Gastrocnemius medialis (tissue), 4 donors: ENCODE measurements at regions of chr22 and their contacts with region 1.

Region 1: GRCh38 chr22:22959147-22959827 is 71.7 kb downstream of the IGLL5 start:
- DNase-seq: peak in 1 of 2 donors; percentile 33
- ATAC-seq: no peak
- H3K4me3 ChIP-seq: no peak overlapping the region
- H3K27ac ChIP-seq: peak overlapping the region in 3 of 4 donors; percentile 18 to 56 (median 50)
- H3K4me1 ChIP-seq: no peaks in the 10 kb centered on the region
- H3K27me3 ChIP-seq: peaks cover 2 to 5% (median 3%) of the 10 kb centered on the region in 3 donors
- CTCF ChIP-seq: peak; percentile 70 to 88 (median 71)
- POLR2A ChIP-seq: no peak

Region 2: GRCh38 chr22:22207845-22208564 is 751.3 kb before region 1 on chr22:
- in situ Hi-C with region 1: no loop called
- intact Hi-C with region 1: loop called (anchors 10 kb)
- DNase-seq: peak in 1 of 2 donors; percentile 11
- ATAC-seq: no peak
- H3K4me3 ChIP-seq: no peak overlapping the region
- H3K27ac ChIP-seq: no peak overlapping the region
- H3K4me1 ChIP-seq: no peaks in the 10 kb centered on the region
- H3K27me3 ChIP-seq: peaks cover 0 to 18% (median 15%) of the 10 kb centered on the region in 3 donors
- CTCF ChIP-seq: peak in 3 of 5 experiments; percentile 29 to 39 (median 37)
- POLR2A ChIP-seq: no peak

Region 3: DNA sequence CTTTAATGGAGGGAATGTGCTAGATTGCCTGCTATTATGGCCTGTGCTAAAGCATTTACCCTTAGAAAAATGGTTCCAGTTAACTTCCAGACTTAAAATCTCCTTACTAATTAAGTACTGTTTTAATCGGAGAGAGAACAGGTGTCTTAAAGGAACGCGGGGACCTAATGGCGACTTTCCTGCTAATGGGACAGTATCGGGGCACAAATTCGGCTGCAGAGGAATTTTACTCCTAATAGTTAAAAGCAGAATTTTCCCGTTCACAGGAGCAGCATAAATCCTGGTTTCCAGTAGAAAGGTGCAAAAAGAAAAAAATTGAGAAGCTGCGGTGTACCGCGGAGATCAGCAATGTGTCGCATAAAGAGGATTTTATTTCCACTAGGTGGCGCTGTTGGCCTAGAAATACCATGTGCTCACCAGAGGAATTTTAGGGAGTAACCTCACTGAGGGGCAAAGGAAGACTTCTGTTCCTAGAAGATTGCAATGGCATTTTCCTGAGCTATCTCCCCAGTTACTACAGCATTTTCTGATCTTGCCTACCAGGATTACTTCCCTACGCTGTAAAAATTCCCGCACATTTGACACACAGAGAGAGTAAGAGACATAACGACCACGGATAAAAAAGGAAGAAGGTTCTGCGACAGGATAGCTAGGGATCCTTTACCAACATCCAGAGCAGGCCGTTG is 495.3 kb before region 1 on chr22:
- in situ Hi-C with region 1: loop called in 2 of 4 experiments (anchors 10 to 25 kb)
- intact Hi-C with region 1: loop called (anchors 10 kb)
- DNase-seq: peak in 1 of 2 donors; percentile 17
- ATAC-seq: peak; percentile 52 to 58
- H3K4me3 ChIP-seq: peak overlapping the region in 1 of 4 donors; percentile 16
- H3K27ac ChIP-seq: no peak overlapping the region
- H3K4me1 ChIP-seq: no peaks in the 10 kb centered on the region
- H3K27me3 ChIP-seq: peaks cover 0 to 28% (median 14%) of the 10 kb centered on the region in 3 donors
- CTCF ChIP-seq: peak; percentile 37 to 72 (median 59)
- POLR2A ChIP-seq: no peak

Region 4: GRCh38 chr22:22838148-22838786 is 121.0 kb before region 1 on chr22:
- in situ Hi-C with region 1: no loop called
- intact Hi-C with region 1: no loop called
- DNase-seq: no peak
- ATAC-seq: no peak
- H3K4me3 ChIP-seq: no peak overlapping the region
- H3K27ac ChIP-seq: no peak overlapping the region
- H3K4me1 ChIP-seq: no peaks in the 10 kb centered on the region
- H3K27me3 ChIP-seq: peaks cover 0 to 10% (median 8%) of the 10 kb centered on the region in 3 donors
- CTCF ChIP-seq: no peak
- POLR2A ChIP-seq: no peak

Region 5: GRCh38 chr22:22848364-22848866 is 110.9 kb before region 1 on chr22:
- in situ Hi-C with region 1: loop called in 1 of 4 experiments (anchors 5 kb)
- intact Hi-C with region 1: loop called (anchors 2 kb)
- DNase-seq: peak in 1 of 2 donors; percentile 9
- ATAC-seq: peak; percentile 52 to 56
- H3K4me3 ChIP-seq: no peak overlapping the region
- H3K27ac ChIP-seq: no peak overlapping the region
- H3K4me1 ChIP-seq: no peaks in the 10 kb centered on the region
- H3K27me3 ChIP-seq: peaks cover 0 to 4% (median 0%) of the 10 kb centered on the region in 3 donors
- CTCF ChIP-seq: peak; percentile 49 to 79 (median 68)
- POLR2A ChIP-seq: no peak

Region 6: GRCh38 chr22:23128269-23129108 is 169.2 kb after region 1 on chr22:
- in situ Hi-C with region 1: loop called (anchors 5 to 10 kb)
- intact Hi-C with region 1: loop called (anchors 1 kb)
- DNase-seq: peak in 1 of 2 donors; percentile 34
- ATAC-seq: peak; percentile 51 to 73
- H3K4me3 ChIP-seq: no peak overlapping the region
- H3K27ac ChIP-seq: no peak overlapping the region
- H3K4me1 ChIP-seq: peaks cover 0 to 3% of the 10 kb centered on the region in 2 donors
- H3K27me3 ChIP-seq: no peaks in the 10 kb centered on the region
- CTCF ChIP-seq: peak; percentile 69 to 80 (median 75)
- POLR2A ChIP-seq: no peak

Region 7: GRCh38 chr22:23281406-23282088 is 322.3 kb after region 1 on chr22:
- in situ Hi-C with region 1: loop called in 1 of 4 experiments (anchors 25 kb)
- intact Hi-C with region 1: loop called (anchors 2 kb)
- DNase-seq: peak; percentile 61 to 62
- ATAC-seq: peak; percentile 82 to 83
- H3K4me3 ChIP-seq: no peak overlapping the region
- H3K27ac ChIP-seq: no peak overlapping the region
- H3K4me1 ChIP-seq: peaks cover 0 to 4% of the 10 kb centered on the region in 2 donors
- H3K27me3 ChIP-seq: no peaks in the 10 kb centered on the region
- CTCF ChIP-seq: peak; percentile 85 to 95 (median 93)
- POLR2A ChIP-seq: no peak

Region 8: DNA sequence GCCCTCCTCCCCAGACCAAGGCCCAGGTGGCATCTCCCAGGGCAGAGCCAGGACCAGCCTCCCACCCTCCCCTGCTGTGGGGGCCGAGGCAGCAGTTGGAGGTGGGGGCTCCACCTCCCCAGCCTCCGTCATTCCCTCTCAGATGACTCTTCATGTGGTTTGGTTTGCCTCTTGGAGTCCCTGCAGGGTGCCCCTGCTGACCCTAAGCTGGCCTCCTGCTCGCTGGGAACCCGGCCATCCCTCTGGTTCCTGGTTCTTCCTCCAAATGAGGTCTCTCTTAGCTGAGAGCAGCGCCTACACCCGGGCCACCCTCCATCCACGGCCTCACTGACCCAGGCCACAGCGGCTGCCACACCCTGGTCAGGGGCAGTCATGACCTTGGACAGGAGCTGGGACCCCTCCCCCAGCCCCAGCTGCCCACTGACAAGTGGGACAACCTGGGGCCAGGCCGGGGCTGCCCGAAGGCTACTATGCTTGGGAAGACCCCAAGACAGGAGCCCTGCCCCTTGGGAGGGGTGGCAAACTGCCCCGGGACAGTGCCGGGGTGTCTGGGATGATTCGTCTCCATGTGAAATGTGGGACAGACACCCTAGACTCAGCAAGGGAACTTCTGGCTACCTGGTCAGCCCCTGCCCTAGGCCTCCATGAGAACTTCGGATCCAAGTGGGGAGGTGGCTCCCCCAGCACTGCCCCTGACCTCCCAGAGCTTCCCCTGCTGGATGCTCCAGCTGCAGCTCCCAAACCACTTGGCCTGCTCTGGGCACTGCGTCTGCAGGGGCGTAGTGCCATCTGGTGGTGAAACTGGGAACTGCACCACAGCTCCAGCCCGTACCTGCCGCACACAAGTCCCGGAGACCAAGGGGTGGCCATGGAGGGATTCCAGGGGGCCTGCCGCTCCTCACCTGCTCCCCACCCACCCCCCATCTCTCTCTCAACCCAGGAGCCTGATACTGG is 426.3 kb after region 1 on chr22:
- in situ Hi-C with region 1: no loop called
- intact Hi-C with region 1: loop called (anchors 5 kb)
- DNase-seq: peak; percentile 46 to 62
- ATAC-seq: peak; percentile 78 to 88
- H3K4me3 ChIP-seq: no peak overlapping the region
- H3K27ac ChIP-seq: no peak overlapping the region
- H3K4me1 ChIP-seq: no peaks in the 10 kb centered on the region
- H3K27me3 ChIP-seq: no peaks in the 10 kb centered on the region
- CTCF ChIP-seq: peak; percentile 91 to 99 (median 96)
- POLR2A ChIP-seq: no peak